ENCODE measurements at regions of chr4 and their contacts with region 1.

Region 1: DNA sequence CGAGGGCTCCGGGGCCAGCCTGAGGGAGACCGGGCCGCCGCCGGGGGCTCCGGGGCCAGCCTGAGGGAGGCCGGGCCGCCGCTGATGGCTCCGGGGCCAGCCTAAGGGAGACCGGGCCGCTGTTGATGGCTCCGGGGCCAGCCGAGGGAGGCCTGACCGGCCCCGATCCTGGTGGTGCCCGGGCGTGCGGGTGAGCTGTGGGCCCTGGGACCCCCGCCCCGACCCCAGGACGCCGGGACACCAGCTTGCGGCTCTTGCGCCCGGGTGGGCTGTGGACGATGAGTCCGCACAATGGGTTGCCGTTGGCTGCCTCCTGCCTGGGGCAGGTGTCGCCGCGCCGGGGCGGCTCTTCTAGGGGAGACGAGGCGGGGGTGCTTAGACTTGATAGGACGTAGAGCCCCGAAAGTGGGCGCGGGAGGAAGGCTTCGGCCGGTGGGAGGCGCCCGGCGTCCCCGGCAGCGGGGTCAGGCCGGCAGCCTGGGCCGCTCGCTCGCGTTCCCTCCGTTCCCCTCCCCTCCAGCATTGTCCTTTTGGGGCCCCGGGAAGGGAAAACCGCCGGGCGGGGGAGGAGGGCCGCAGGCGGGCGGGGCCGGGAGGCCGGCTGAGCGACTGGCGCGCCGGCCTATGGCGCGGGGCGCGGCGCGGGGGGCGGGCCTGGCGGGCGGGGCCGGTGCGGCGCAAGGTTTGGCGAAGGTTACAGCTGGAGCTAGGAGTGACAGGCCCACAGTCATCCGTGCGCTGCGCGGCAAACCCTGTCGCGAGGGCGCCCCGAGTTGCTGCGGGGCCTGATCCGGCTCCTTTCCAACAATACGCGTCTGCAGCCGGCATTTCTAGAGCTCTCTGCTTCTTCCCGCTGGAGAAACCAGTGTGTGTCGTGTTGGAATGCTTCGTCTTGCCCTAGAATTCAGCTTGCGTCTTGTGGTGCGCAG is 790 bp downstream of the KIAA0232 start:
- DNase-seq: peak; percentile 94
- ATAC-seq: peak; percentile 82
- H3K4me3 Mint-ChIP-seq: peak overlapping the region; percentile 84
- H3K27ac Mint-ChIP-seq: peak overlapping the region; percentile 73
- H3K4me1 Mint-ChIP-seq: peaks cover 52% of the 10 kb centered on the region
- H3K27me3 Mint-ChIP-seq: no peaks in the 10 kb centered on the region

Region 2: GRCh38 chr4:6087673-6088341 is 695.5 kb before region 1 on chr4:
- CTCF ChIA-PET with region 1: no interaction called
- POLR2A ChIA-PET with region 1: no interaction called
- intact Hi-C with region 1: no loop called
- DNase-seq: no peak
- ATAC-seq: no peak
- H3K4me3 Mint-ChIP-seq: no peak overlapping the region
- H3K27ac Mint-ChIP-seq: no peak overlapping the region
- H3K4me1 Mint-ChIP-seq: no peaks in the 10 kb centered on the region
- H3K27me3 Mint-ChIP-seq: peaks cover 2% of the 10 kb centered on the region

Region 3: GRCh38 chr4:6640292-6641163 is 142.8 kb before region 1 on chr4 and contains the start of gene MRFAP1:
- CTCF ChIA-PET with region 1: no interaction called
- POLR2A ChIA-PET with region 1: interaction called, 3 read pairs
- intact Hi-C with region 1: loop called in 1 of 2 experiments (anchors 1 kb)
- DNase-seq: peak; percentile 97
- ATAC-seq: peak; percentile 86
- H3K4me3 Mint-ChIP-seq: peak within 1 kb of the TSS; percentile 96
- H3K27ac Mint-ChIP-seq: peak within 1 kb of the TSS; percentile 100
- H3K4me1 Mint-ChIP-seq: peaks cover 27% of the 10 kb centered on the region
- H3K27me3 Mint-ChIP-seq: no peaks in the 10 kb centered on the region
- total RNA-seq, gene MRFAP1: 66.8 to 122 TPM

Region 4: DNA sequence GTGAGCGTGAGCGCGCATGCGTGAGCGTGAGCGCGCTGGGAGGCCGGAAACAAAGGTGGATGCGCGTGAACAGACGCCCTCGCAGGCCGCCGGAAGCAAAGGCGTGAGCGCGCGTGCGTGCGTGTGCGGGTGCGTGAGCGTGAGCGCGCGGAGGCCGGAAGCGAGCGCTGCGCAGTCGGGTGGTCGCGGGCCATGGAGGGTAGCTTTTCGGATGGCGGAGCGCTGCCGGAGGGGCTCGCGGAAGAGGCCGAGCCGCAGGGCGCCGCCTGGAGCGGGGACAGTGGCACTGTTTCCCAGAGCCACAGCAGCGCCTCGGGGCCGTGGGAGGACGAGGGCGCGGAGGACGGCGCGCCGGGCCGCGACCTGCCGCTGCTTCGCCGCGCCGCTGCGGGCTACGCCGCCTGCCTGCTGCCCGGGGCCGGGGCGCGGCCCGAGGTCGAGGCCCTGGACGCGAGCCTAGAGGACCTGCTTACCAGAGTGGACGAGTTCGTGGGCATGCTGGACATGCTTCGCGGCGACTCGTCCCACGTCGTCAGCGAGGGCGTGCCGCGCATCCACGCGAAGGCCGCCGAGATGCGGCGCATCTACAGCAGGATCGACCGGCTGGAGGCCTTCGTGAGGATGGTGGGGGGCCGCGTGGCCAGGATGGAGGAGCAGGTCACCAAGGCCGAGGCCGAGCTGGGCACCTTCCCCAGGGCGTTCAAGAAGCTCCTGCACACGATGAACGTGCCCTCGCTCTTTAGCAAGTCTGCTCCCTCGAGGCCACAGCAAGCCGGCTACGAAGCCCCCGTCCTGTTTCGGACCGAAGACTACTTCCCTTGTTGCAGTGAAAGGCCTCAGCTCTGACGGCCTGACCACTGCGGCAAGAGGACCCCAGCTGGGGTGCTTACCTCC is 67.1 kb before region 1 on chr4 and contains the start of gene BLOC1S4:
- CTCF ChIA-PET with region 1: interaction called, 8 read pairs
- POLR2A ChIA-PET with region 1: no interaction called
- intact Hi-C with region 1: loop called (anchors 1 to 2 kb)
- DNase-seq: peak; percentile 93
- ATAC-seq: peak; percentile 80
- H3K4me3 Mint-ChIP-seq: peak within 1 kb of the TSS; percentile 92
- H3K27ac Mint-ChIP-seq: peak within 1 kb of the TSS; percentile 92
- H3K4me1 Mint-ChIP-seq: peaks cover 27% of the 10 kb centered on the region
- H3K27me3 Mint-ChIP-seq: no peaks in the 10 kb centered on the region
- total RNA-seq, gene BLOC1S4: 10.1 to 16.7 TPM

Region 5: GRCh38 chr4:6909073-6909965 is 126.0 kb after region 1 on chr4 and contains the start of gene TBC1D14:
- CTCF ChIA-PET with region 1: no interaction called
- POLR2A ChIA-PET with region 1: no interaction called
- intact Hi-C with region 1: loop called (anchors 1 to 5 kb)
- DNase-seq: peak; percentile 92
- ATAC-seq: peak; percentile 89
- H3K4me3 Mint-ChIP-seq: peak within 1 kb of the TSS; percentile 94
- H3K27ac Mint-ChIP-seq: peak within 1 kb of the TSS; percentile 90
- H3K4me1 Mint-ChIP-seq: peaks cover 44% of the 10 kb centered on the region
- H3K27me3 Mint-ChIP-seq: peaks cover 3% of the 10 kb centered on the region
- total RNA-seq, gene TBC1D14: 36.7 to 44.0 TPM

Region 6: DNA sequence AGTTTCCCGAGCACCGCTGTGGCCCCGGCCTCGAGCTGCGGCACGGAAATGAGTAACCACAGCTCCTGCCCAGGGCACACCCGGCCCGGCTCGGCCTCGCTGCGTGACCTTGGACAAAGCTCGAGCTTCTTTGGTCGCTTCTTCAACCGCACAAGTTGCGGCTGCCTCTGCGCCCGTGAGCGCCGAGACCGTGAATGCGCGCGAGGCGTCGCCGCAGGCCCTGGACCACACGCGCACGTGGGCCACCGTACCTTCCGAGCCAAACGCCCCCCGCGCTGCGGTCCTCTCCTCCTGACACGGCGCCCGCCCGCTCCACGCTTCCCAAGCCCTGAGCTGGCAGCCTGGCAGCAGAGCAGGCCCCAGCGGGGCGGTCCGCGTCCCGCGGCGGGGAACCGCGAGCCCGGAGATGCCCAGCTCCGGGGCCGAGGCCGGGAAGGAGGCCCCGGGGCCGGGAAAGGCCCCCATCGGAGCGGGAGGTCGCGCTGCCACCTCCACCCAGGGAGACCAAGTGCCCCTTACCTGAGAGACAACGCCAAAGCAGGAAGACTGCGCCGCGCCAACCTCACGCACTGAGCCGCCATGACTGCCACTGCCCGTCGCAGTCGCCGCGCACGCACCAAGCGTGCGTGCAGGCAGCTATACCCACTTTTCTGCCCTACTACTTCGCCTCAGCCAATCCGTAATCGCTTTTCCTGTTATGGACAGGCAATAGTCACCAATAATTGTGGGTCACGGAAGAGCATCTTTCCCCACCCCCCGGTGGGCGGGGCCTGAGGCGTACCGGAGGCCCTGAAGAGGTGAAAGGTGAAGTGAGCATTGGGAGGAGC is 284.3 kb after region 1 on chr4 and contains the start of gene GRPEL1:
- CTCF ChIA-PET with region 1: interaction called, 3 read pairs
- POLR2A ChIA-PET with region 1: no interaction called
- intact Hi-C with region 1: loop called (anchors 1 kb)
- DNase-seq: peak; percentile 100
- ATAC-seq: peak; percentile 94
- H3K4me3 Mint-ChIP-seq: peak within 1 kb of the TSS; percentile 94
- H3K27ac Mint-ChIP-seq: peak within 1 kb of the TSS; percentile 94
- H3K4me1 Mint-ChIP-seq: peaks cover 43% of the 10 kb centered on the region
- H3K27me3 Mint-ChIP-seq: peaks cover 2% of the 10 kb centered on the region
- total RNA-seq, gene GRPEL1: 81.0 to 93.0 TPM

Measured in activated CD4-positive, alpha-beta T cell treated with anti-CD3 and anti-CD28 coated beads for 36 hours (primary cell).